ENCODE measurements at regions of chr3 and their contacts with region 1.

Region 1: GRCh38 chr3:39499651-39500240 is 32.3 kb downstream of the MOBP start:
- DNase-seq: no peak
- H3K4me3 ChIP-seq: no peak overlapping the region
- H3K27ac ChIP-seq: no peak overlapping the region
- H3K27me3 ChIP-seq: peaks cover 20% of the 10 kb centered on the region
- CTCF ChIP-seq: no peak

Region 2: DNA sequence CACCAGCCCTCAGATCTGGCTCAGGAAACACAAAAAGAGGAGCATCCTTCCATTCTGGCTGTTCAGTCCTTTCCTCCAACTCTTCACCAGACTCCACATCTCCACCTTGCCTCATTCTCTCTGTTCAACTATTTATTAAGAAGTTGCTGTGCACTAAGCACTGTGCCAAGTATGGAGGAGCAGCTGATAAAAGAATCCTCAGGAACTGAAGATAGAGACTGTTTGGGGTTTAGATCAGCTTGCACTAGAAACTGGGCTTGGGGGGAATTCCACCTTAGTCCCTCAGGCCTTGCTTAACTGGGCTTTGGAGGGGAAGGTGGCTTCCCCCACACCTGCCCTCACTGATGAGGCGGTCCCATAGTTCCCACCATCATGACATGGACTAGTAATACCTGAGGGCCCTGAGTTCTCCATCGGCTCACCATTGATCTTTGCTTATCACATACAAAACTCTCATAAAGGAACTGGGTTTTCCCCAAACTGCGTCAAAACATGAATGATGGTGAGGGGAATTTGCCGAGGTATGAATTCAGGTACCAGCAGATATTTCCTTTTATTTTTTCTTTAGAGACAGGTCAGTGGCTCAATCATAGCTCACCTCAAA is 171.9 kb before region 1 on chr3:
- CTCF ChIA-PET with region 1: no interaction called
- POLR2A ChIA-PET with region 1: no interaction called
- DNase-seq: no peak
- H3K4me3 ChIP-seq: no peak overlapping the region
- H3K27ac ChIP-seq: no peak overlapping the region
- H3K27me3 ChIP-seq: no peaks in the 10 kb centered on the region
- CTCF ChIP-seq: no peak

Region 3: GRCh38 chr3:39414421-39414907 is 85.3 kb before region 1 on chr3:
- CTCF ChIA-PET with region 1: interaction called, 36 read pairs
- POLR2A ChIA-PET with region 1: no interaction called
- DNase-seq: no peak
- H3K4me3 ChIP-seq: no peak overlapping the region
- H3K27ac ChIP-seq: no peak overlapping the region
- H3K27me3 ChIP-seq: no peaks in the 10 kb centered on the region
- CTCF ChIP-seq: no peak

Region 4: GRCh38 chr3:39473452-39474127 is 26.2 kb before region 1 on chr3:
- CTCF ChIA-PET with region 1: interaction called, 11 read pairs
- POLR2A ChIA-PET with region 1: no interaction called
- DNase-seq: no peak
- H3K4me3 ChIP-seq: no peak overlapping the region
- H3K27ac ChIP-seq: no peak overlapping the region
- H3K27me3 ChIP-seq: no peaks in the 10 kb centered on the region
- CTCF ChIP-seq: no peak

Region 5: GRCh38 chr3:39485547-39485946 is 14.2 kb before region 1 on chr3:
- CTCF ChIA-PET with region 1: interaction called, 11 read pairs
- POLR2A ChIA-PET with region 1: no interaction called
- DNase-seq: no peak
- H3K4me3 ChIP-seq: no peak overlapping the region
- H3K27ac ChIP-seq: no peak overlapping the region
- H3K27me3 ChIP-seq: peaks cover 2% of the 10 kb centered on the region
- CTCF ChIP-seq: no peak

Region 6: GRCh38 chr3:39529600-39529999 is 29.9 kb after region 1 on chr3:
- CTCF ChIA-PET with region 1: no interaction called
- POLR2A ChIA-PET with region 1: no interaction called
- DNase-seq: no peak
- H3K4me3 ChIP-seq: no peak overlapping the region
- H3K27ac ChIP-seq: no peak overlapping the region
- H3K27me3 ChIP-seq: no peaks in the 10 kb centered on the region
- CTCF ChIP-seq: no peak

Measured in AG04450 (cell line).